GM13976 (cell line): ENCODE measurements at regions of chr2 and their contacts with region 1.

Region 1: DNA sequence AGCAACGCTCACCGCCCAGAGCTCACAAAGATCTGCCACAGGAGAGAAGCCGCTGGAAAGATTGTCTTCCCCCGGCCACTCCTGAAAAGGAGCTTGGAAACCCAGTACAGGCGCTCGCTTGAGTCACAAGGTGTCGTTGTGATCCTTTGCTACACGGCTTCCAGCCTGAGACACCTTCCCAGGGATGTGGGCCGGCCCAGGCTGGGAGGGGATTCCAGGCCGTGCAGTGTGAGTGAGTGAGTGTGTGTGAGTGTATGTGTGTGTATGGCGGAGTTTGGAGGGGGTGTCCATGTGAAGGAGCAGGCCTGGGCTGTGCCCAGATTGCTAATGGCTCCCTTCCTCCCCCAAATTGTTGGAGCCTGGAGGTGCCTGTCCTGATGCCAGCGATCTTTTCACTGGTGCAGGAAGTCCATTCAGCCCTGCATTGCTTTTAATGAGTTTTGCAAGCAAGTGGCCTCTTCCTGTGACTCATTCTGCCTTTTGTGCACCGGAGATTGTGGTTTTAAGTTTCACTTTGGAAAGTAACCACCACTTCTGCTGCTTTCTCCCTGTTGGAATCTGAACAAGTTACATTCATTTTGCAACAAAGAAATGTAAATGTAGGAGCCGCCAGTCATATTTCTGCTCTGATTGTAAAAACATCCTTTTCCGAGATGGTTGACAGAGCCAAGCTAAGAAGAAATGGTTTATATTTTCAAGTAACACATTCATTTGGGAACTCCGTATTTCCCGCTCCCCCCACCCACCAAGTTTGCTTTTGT is 83.7 kb downstream of the LPIN1 start:
- DNase-seq: peak; percentile 67
- CTCF ChIP-seq: no peak

Region 2: GRCh38 chr2:12716282-12717190 is 886.4 kb after region 1 on chr2 and contains the start of gene TRIB2:
- in situ Hi-C with region 1: loop called (anchors 25 kb)
- DNase-seq: peak; percentile 84
- CTCF ChIP-seq: no peak

Region 3: DNA sequence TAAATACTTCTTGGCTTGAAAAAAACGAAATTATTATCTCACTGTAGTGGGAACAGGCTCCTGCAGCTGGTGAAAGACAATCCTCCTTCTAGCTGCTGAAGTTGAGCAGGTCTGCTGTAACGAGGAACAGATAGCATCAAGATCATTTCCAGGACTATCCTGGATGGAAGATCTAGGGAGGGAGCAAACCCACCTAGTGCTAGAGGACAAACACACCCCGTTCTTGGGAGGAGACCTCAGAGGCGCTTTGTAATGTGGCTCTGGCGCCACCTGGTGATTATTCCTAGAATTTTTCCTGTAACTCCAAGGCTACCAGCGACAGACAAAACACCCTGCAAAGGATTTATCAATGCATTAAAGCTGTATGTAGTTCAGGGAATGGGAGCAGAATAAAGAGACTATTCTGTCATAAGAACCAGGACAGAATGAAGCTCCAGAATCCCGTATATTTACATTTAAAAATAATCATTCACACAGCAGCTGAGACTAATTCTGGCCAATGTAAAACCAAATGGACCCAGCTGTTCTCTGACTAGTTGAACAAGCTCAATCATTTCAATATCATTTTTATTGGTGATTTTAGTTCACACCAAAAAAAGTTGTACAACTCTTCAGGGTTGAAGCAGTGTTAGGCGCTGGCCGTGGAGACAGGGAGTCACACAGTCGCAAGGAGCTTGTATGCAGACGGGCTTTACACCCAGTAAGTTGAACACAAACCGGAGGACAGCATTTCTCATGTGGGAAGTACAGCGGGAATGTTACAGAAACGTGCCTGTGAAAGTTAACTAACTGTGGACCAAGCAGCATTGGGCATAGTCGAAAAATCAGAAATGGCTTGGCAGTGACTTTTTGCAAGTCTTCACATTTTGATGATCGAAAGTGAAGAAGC is 1176.9 kb after region 1 on chr2:
- in situ Hi-C with region 1: loop called (anchors 25 kb)
- DNase-seq: peak; percentile 37
- CTCF ChIP-seq: peak; percentile 42